Psoas muscle (tissue), 8 donors: ENCODE measurements at regions of chr7 and their contacts with region 1.

Region 1: DNA sequence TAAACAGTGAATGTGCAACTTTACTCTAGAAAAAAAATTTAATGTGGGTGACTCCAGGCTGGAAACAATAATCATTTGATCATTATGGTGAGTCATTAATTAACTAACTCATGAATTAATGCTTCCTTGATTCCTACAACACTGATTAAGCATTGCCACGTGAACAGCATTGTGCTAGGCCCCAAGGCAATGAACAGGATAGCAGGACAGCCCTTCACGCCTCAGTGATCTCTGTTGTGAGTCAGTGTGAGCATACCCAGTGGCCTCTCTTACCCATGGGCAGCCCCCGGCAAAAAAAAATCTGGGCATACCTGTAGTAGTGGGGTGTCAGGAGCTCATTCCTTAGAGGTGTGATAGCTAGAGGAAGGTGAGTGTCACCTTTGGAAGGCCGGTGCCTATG is 76.0 kb downstream of the DENND2A start:
- DNase-seq: no peak
- ATAC-seq: no peak
- H3K4me3 ChIP-seq: no peak overlapping the region
- H3K27ac ChIP-seq: no peak overlapping the region
- H3K4me1 ChIP-seq: no peaks in the 10 kb centered on the region
- H3K27me3 ChIP-seq: no peaks in the 10 kb centered on the region
- CTCF ChIP-seq: no peak

Region 2: DNA sequence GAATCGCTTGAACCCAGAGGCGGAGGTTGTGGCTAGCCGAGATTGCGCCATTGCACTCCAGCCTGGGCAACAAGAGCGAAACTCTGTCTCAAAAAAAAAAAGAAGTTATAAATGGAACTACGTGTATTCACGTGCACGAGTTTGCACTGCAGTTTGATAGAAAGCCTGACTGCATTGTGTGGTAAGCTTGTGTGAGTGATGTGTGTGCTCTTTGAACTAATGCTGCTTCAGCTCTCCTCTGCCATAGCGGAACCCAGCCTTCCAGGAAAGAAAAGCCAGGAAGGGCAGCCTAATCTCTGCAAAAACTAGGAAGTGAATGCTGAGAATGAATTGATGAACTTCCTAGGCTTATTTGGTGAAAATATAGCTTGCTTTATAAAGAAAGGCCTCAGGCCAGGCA is 69.8 kb before region 1 on chr7:
- intact Hi-C with region 1: no loop called
- DNase-seq: peak in 1 of 2 donors; percentile 39
- ATAC-seq: no peak
- H3K4me3 ChIP-seq: no peak overlapping the region
- H3K27ac ChIP-seq: no peak overlapping the region
- H3K4me1 ChIP-seq: no peaks in the 10 kb centered on the region
- H3K27me3 ChIP-seq: no peaks in the 10 kb centered on the region
- CTCF ChIP-seq: no peak

Region 3: GRCh38 chr7:140541513-140542227 is 23.0 kb before region 1 on chr7:
- intact Hi-C with region 1: loop called in 1 of 2 experiments (anchors 2 kb)
- DNase-seq: peak; percentile 70 to 79
- ATAC-seq: peak; percentile 53 to 81 (median 74)
- H3K4me3 ChIP-seq: no peak overlapping the region
- H3K27ac ChIP-seq: peak overlapping the region; percentile 46
- H3K4me1 ChIP-seq: peaks cover 5% of the 10 kb centered on the region
- H3K27me3 ChIP-seq: no peaks in the 10 kb centered on the region
- CTCF ChIP-seq: no peak